ENCODE measurements at regions of chr11 and their contacts with region 1.

Region 1: DNA sequence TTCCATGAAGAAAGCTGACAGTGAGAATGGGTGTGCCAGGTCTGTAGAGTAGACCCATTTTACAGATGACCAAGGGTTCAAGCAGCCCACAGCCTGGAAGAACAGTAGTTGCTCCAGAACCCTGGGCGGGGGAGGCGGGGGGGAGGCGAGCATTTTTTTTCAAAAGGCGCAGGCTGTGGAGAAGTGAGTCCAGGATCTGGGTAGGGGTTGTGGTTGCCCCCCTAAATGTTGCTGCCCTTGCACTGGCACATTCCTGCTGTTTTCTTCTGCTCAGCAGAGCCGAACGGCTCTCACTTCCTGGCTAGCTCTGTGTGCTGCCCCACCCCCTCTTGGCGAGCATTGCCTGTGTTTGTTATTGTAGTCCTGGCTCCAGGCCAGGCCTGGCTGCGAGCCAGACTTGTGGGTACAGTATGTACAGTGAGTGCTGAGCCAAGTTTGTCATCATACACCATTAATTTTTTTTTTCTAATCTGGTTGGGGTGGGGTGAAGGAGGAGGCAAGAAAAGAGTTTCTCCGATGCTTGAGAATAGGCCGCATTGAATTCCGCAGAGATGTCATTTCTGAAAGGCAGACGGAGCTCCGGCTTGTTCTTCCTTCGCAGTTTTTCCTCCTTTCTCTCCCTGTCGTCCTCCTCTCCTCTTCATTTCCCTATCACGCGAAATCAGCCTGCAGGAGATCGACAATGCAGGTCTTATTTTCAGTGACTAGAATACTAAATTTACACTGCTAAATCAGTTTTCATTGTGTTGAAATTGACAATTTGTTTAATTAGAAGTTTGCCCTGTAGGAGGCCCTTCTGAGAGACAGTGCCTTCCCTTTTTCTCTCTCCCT is 100.5 kb downstream of the ZBTB16 start:
- DNase-seq: peak; percentile 96 to 100 (median 98)
- ATAC-seq: peak; percentile 95
- H3K4me3 ChIP-seq: peak overlapping the region in 1 of 2 experiments; percentile 2
- H3K4me3 Mint-ChIP-seq: peak overlapping the region; percentile 68
- H3K27ac ChIP-seq: peak overlapping the region; percentile 25 to 51
- H3K27ac Mint-ChIP-seq: peak overlapping the region; percentile 94
- H3K4me1 ChIP-seq: peaks cover 65% of the 10 kb centered on the region
- H3K4me1 Mint-ChIP-seq: peaks cover 87% of the 10 kb centered on the region
- H3K27me3 ChIP-seq: no peaks in the 10 kb centered on the region
- H3K27me3 Mint-ChIP-seq: no peaks in the 10 kb centered on the region
- CTCF ChIP-seq: no peak

Region 2: GRCh38 chr11:113314389-113315301 is 845.4 kb before region 1 on chr11 and contains the start of gene TTC12:
- CTCF ChIA-PET with region 1: no interaction called
- POLR2A ChIA-PET with region 1: no interaction called
- intact Hi-C with region 1: loop called in 1 of 2 experiments (anchors 10 kb)
- DNase-seq: peak; percentile 82 to 95 (median 90)
- ATAC-seq: peak; percentile 98
- H3K4me3 ChIP-seq: peak within 1 kb of the TSS; percentile 59 to 66
- H3K4me3 Mint-ChIP-seq: peak within 1 kb of the TSS; percentile 82
- H3K27ac ChIP-seq: peak within 1 kb of the TSS; percentile 81 to 87
- H3K27ac Mint-ChIP-seq: peak within 1 kb of the TSS; percentile 85
- H3K4me1 ChIP-seq: peaks cover 17% of the 10 kb centered on the region
- H3K4me1 Mint-ChIP-seq: peaks cover 30% of the 10 kb centered on the region
- H3K27me3 ChIP-seq: no peaks in the 10 kb centered on the region
- H3K27me3 Mint-ChIP-seq: no peaks in the 10 kb centered on the region
- CTCF ChIP-seq: no peak
- total RNA-seq, gene TTC12: 8.6 to 10.8 TPM

Region 3: GRCh38 chr11:113875234-113876073 is 284.6 kb before region 1 on chr11 and contains the start of gene USP28:
- CTCF ChIA-PET with region 1: no interaction called
- POLR2A ChIA-PET with region 1: no interaction called
- intact Hi-C with region 1: loop called (anchors 10 kb)
- DNase-seq: peak; percentile 45 to 90 (median 76)
- ATAC-seq: peak; percentile 85
- H3K4me3 ChIP-seq: peak within 1 kb of the TSS; percentile 80 to 95
- H3K4me3 Mint-ChIP-seq: peak within 1 kb of the TSS; percentile 96
- H3K27ac ChIP-seq: peak within 1 kb of the TSS; percentile 52 to 88
- H3K27ac Mint-ChIP-seq: peak within 1 kb of the TSS; percentile 97
- H3K4me1 ChIP-seq: peaks cover 11% of the 10 kb centered on the region
- H3K4me1 Mint-ChIP-seq: peaks cover 48% of the 10 kb centered on the region
- H3K27me3 ChIP-seq: no peaks in the 10 kb centered on the region
- H3K27me3 Mint-ChIP-seq: no peaks in the 10 kb centered on the region
- CTCF ChIP-seq: no peak
- total RNA-seq, gene USP28: 6.4 to 6.8 TPM

Region 4: DNA sequence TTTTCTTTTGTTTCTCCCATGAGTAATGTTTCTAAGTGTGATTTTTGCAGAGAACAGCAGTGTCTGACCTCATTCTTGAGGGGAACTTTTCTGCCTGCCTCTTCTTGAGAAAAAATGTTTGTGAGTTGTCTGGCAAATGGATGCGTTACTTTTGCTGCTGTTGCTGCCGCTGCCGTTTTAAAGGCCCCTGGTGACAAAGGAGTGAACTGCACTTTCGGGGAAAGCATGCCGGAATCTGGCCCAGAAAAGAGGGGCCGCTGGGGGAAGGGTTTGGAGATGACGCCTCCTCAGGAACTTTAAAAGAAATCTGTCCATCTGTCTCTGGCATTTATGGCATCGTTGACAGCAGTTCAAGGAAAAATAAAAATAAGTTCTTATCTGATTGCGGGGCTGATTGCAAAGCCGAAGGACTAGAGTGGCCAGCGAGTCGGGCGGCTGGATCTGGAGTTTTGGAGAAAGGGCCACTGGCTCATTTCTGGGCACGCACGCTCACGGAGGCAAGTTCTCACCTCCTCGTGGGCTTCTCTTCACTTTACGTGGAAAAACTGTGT is 84.1 kb before region 1 on chr11:
- CTCF ChIA-PET with region 1: interaction called, 8 read pairs
- POLR2A ChIA-PET with region 1: interaction called, 3 read pairs
- intact Hi-C with region 1: loop called in 1 of 2 experiments (anchors 5 kb)
- DNase-seq: peak in 6 of 9 experiments; percentile 31 to 75 (median 57)
- ATAC-seq: peak; percentile 16
- H3K4me3 ChIP-seq: no peak overlapping the region
- H3K4me3 Mint-ChIP-seq: peak overlapping the region; percentile 40
- H3K27ac ChIP-seq: peak overlapping the region in 1 of 2 experiments; percentile 64
- H3K27ac Mint-ChIP-seq: peak overlapping the region; percentile 38
- H3K4me1 ChIP-seq: peaks cover 48% of the 10 kb centered on the region
- H3K4me1 Mint-ChIP-seq: peaks cover 76% of the 10 kb centered on the region
- H3K27me3 ChIP-seq: no peaks in the 10 kb centered on the region
- H3K27me3 Mint-ChIP-seq: no peaks in the 10 kb centered on the region
- CTCF ChIP-seq: peak; percentile 56

Region 5: GRCh38 chr11:114135737-114136151 is 24.3 kb before region 1 on chr11:
- CTCF ChIA-PET with region 1: interaction called, 3 read pairs
- POLR2A ChIA-PET with region 1: no interaction called
- intact Hi-C with region 1: loop called in 1 of 2 experiments (anchors 2 kb)
- DNase-seq: peak in 1 of 9 experiments; percentile 20
- ATAC-seq: no peak
- H3K4me3 ChIP-seq: no peak overlapping the region
- H3K4me3 Mint-ChIP-seq: no peak overlapping the region
- H3K27ac ChIP-seq: no peak overlapping the region
- H3K27ac Mint-ChIP-seq: no peak overlapping the region
- H3K4me1 ChIP-seq: no peaks in the 10 kb centered on the region
- H3K4me1 Mint-ChIP-seq: peaks cover 53% of the 10 kb centered on the region
- H3K27me3 ChIP-seq: no peaks in the 10 kb centered on the region
- H3K27me3 Mint-ChIP-seq: no peaks in the 10 kb centered on the region
- CTCF ChIP-seq: no peak

Region 6: DNA sequence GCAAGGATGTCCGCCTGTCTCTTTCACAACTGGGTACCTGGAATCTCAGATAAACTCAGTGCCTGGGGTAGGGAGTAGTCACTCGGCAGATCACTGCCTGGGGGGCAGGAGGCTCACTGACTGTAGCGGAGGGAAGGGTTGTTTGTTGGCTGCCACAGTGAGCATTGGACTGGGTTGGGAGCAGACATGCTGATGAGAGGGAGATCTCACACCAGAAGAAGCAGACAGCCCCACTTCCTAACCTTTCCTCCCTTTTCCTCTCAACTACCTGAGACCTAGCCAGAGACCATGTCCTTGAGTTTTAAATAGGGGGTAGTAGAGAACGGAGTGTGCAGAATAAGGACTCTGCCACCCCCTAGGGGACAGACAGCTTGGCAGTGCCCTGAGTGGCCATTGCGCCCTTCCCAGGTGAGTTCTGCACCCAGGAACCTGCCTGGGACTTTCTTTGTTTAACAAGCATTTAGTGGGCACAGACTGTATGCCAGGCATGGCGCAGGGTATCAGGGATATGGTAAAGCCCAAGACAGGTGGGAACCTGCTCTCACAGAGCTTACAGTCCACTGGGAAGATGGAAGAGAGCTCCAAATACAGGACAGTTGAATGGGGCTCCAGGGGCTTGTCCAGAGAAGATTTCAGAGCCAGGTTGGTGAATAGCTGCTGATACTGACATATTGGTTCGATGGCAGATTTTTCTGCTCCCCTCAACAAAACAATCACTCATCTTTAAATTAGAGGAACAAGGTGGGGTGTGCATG is 20.5 kb after region 1 on chr11:
- CTCF ChIA-PET with region 1: interaction called, 25 read pairs
- POLR2A ChIA-PET with region 1: interaction called, 20 read pairs
- intact Hi-C with region 1: loop called (anchors 1 to 2 kb)
- DNase-seq: peak in 4 of 9 experiments; percentile 39 to 59 (median 50)
- ATAC-seq: no peak
- H3K4me3 ChIP-seq: no peak overlapping the region
- H3K4me3 Mint-ChIP-seq: peak overlapping the region; percentile 12
- H3K27ac ChIP-seq: no peak overlapping the region
- H3K27ac Mint-ChIP-seq: peak overlapping the region; percentile 46
- H3K4me1 ChIP-seq: peaks cover 64% of the 10 kb centered on the region
- H3K4me1 Mint-ChIP-seq: peaks cover 77% of the 10 kb centered on the region
- H3K27me3 ChIP-seq: no peaks in the 10 kb centered on the region
- H3K27me3 Mint-ChIP-seq: no peaks in the 10 kb centered on the region
- CTCF ChIP-seq: peak; percentile 36

Region 7: DNA sequence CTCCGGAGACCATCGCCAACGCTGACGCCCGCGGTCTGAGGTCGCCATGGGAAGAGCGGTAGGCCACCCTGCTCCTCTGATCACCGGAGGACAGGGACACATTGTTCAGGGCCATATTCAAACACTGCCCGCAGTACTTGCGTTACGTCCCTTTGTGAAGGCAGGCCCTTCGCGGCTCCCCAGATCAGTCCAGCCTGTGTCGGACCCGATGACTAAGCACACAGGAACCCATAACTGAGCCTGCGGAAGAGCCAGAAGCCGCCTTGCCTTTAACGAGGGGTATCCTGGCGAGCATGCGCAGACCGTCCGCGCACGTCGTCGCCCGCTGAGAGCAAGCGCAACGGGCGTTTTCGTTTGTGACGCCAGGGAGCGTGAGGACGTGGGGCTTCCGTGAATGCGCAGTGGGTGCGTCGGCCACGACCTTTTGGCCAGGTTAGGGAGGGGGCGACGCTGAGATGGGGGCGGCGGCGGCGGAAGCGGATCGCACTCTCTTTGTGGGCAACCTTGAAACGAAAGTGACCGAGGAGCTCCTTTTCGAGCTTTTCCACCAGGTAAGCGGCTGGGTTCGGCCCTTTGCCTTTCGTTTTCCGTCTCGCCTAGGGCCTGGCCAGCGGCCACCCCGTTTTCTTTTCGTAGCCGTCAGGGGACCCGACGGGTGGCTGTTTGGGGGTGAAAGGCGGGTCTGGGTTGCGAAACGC is 240.3 kb after region 1 on chr11 and contains the starts of genes C11orf71 and RBM7:
- CTCF ChIA-PET with region 1: no interaction called
- POLR2A ChIA-PET with region 1: no interaction called
- intact Hi-C with region 1: loop called (anchors 5 kb)
- DNase-seq: peak; percentile 95 to 100 (median 98)
- ATAC-seq: peak; percentile 95
- H3K4me3 ChIP-seq: peak within 1 kb of the TSS; percentile 93 to 94
- H3K4me3 Mint-ChIP-seq: peak within 1 kb of the TSS; percentile 94
- H3K27ac ChIP-seq: peak within 1 kb of the TSS; percentile 97 to 98
- H3K27ac Mint-ChIP-seq: peak within 1 kb of the TSS; percentile 97
- H3K4me1 ChIP-seq: peaks cover 48% of the 10 kb centered on the region
- H3K4me1 Mint-ChIP-seq: peaks cover 57% of the 10 kb centered on the region
- H3K27me3 ChIP-seq: no peaks in the 10 kb centered on the region
- H3K27me3 Mint-ChIP-seq: no peaks in the 10 kb centered on the region
- CTCF ChIP-seq: no peak
- total RNA-seq, gene C11orf71: 6.3 to 8.8 TPM
- total RNA-seq, gene RBM7: 72.7 to 75.3 TPM